SK-N-SH (cell line): ENCODE measurements at regions of chr11 and their contacts with region 1.

Region 1: DNA sequence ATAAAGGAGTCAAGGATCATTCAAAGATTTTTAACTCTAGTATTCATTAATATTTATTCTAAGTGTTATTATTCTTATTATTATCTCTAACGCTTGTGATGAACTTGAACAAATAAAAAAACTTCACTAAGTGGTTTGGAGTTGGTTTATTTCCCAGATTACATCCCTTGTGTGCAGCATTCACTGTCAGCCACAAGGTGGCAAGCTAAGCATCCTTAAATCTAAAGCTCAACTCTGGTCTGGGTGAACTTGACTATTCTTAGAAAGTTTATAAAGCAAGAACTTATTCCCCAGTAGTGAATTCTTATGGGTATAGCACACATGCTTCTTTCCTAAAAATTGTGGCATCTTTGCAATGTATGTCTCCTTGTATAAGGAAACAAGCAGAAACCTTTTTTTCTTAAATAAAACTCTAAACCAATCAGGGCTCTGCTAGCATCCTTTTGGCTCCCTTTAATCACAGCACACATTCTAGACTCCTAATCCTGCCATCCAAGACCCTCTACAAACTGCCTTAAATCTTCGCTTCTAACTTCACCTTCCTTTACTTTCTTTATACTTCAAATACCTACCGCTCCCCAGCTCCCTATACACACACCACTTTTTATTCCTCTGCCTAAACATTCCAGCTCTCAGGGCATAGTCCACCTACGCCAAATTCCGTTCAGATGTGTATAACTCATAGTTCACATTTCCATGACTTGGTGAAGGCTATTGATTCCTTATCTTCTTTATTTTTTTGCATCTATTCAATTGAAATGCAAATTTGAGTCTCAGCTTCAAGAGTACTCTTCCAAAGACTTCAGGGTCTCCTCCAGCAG is 1068.8 kb downstream of the DLG2 start:
- DNase-seq: peak; percentile 27
- H3K4me3 ChIP-seq: no peak overlapping the region; a peak in 1 of 4 replicates
- H3K27ac ChIP-seq: no peak overlapping the region
- H3K4me1 ChIP-seq: no peaks in the 10 kb centered on the region
- H3K27me3 ChIP-seq: no peaks in the 10 kb centered on the region
- CTCF ChIP-seq: peak; percentile 87
- EP300 ChIP-seq: no peak
- RAD21 ChIP-seq: peak; percentile 82

Region 2: DNA sequence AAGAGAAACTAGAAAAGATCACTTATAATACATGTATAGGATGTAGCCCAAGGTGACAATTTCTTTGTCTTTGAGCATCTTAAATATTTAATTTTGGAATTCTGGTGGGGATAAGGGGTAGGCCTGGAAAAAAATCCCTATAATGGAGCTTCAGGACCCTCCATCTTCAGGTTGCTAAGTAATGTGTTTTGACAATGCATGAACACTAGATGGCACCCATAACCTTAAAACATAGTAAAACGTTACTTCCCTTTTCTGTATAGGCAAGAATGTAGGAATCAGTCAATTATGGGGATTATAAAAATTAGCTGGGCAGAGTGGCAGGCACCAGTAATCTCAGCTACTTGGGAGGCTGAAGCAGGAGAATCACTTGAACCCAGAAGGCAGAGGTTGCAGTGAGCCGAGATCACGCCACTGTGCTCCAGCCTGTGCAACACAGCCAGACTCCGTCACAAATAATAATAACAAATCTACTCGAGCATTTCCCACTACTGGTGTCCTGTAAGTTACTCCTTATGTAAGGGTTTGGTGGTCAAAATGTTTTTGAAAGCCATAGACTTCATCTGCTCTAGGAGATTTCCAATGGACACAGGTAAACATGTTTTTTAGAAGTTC is 730.2 kb before region 1 on chr11:
- CTCF ChIA-PET with region 1: interaction called, 41 read pairs
- POLR2A ChIA-PET with region 1: no interaction called
- DNase-seq: peak; percentile 30
- H3K4me3 ChIP-seq: peak overlapping the region in 1 of 2 experiments; percentile 33; a peak in 1 of 4 replicates
- H3K27ac ChIP-seq: peak overlapping the region in 1 of 2 experiments; percentile 75; a peak in 2 of 4 replicates
- H3K4me1 ChIP-seq: peaks cover 0 to 32% of the 10 kb centered on the region in 2 experiments; a peak in 1 of 4 replicates
- H3K27me3 ChIP-seq: no peaks in the 10 kb centered on the region
- CTCF ChIP-seq: peak; percentile 77
- EP300 ChIP-seq: no peak
- RAD21 ChIP-seq: peak; percentile 78